Posterior cingulate gyrus (tissue), 11 donors: ENCODE measurements at regions of chr2 and their contacts with region 1.

Region 1: GRCh38 chr2:112259509-112260294 is 4.9 kb upstream of the ZC3H8 start:
- DNase-seq: peak; percentile 51 to 95 (median 76)

Region 2: DNA sequence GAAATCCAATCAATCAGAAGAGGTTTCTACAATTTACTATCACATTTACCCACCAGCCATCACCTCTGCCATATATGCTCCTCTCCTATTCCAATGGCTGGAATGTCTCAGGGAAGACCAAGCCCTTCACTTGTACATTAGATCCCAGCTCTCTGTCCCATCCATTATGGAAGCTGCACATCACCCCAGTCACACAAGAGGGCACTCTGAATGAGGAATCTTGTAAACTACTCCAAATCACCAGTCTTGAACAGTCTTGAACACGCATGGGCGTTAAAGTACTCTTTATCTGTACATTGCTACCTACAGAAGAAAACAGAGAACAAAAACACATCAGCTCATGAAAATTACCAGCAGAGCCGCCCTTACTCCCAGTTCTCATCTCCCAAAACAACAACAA is 43.5 kb before region 1 on chr2:
- intact Hi-C with region 1: no loop called
- DNase-seq: no peak

Region 3: DNA sequence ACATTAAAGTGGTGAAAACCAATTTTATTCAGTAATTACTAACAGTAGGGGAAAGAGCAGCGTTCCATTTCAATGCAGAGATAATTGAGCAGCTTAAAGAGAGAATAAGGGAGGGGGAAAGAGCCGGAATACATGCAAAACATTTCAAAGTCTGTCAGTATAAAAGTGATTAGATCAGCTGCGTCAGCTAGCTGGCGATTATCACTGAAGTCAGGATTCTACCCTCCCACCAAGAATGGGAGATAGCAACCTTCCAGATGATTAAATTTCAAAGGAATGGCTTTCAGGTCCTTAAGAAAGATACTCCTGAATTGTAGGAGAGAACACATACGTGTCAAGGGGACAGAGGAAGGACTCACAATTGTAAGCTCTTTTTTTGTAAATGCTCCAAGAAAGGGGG is 13.0 kb after region 1 on chr2:
- intact Hi-C with region 1: loop called (anchors 2 kb)
- DNase-seq: no peak